Esophagus squamous epithelium (tissue), 5 donors: ENCODE measurements at regions of chr22 and their contacts with region 1.

Region 1: GRCh38 chr22:44729391-44730021 is 22.9 kb upstream of the ARHGAP8 start:
- DNase-seq: no peak
- H3K4me3 ChIP-seq: no peak overlapping the region
- H3K27ac ChIP-seq: peak overlapping the region; percentile 5 to 64 (median 36)
- H3K4me1 ChIP-seq: peaks cover 0 to 20% (median 8%) of the 10 kb centered on the region in 3 donors
- H3K27me3 ChIP-seq: no peaks in the 10 kb centered on the region
- CTCF ChIP-seq: no peak
- POLR2A ChIP-seq: no peak

Region 2: DNA sequence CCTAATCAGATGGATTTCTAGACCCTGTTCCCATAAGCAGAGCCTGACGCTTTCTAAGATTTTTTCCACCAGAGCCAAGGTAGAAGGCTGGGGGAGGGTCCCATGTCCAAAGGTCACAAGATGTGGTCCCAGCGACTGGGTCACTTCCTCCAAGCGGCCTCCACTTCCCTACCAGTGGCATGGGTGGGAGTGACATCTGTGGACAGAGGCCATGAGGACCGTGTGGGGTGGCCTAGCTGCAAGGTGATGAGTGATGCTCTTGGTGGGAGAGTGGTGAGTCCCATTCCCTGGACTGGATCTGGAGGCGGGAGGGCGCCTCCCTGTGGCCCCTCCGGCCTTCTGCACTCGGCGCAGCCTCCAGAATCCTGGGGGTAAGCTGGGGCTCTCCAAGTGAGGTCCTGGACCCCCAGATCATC is 59.9 kb before region 1 on chr22:
- intact Hi-C with region 1: no loop called
- DNase-seq: no peak
- H3K4me3 ChIP-seq: peak overlapping the region in 3 of 4 donors; percentile 51 to 76 (median 66)
- H3K27ac ChIP-seq: peak overlapping the region in 3 of 4 donors; percentile 46 to 89 (median 89)
- H3K4me1 ChIP-seq: peaks cover 12 to 55% (median 19%) of the 10 kb centered on the region in 3 donors
- H3K27me3 ChIP-seq: peaks cover 0 to 49% (median 0%) of the 10 kb centered on the region in 4 donors
- CTCF ChIP-seq: peak in 3 of 6 experiments; percentile 14 to 28 (median 23)
- POLR2A ChIP-seq: no peak

Region 3: GRCh38 chr22:44697423-44698141 is 31.9 kb before region 1 on chr22:
- intact Hi-C with region 1: loop called (anchors 5 kb)
- DNase-seq: no peak
- H3K4me3 ChIP-seq: no peak overlapping the region
- H3K27ac ChIP-seq: peak overlapping the region in 3 of 4 donors; percentile 50 to 81 (median 66)
- H3K4me1 ChIP-seq: peaks cover 12 to 38% (median 13%) of the 10 kb centered on the region in 3 donors
- H3K27me3 ChIP-seq: peaks cover 0 to 22% (median 0%) of the 10 kb centered on the region in 4 donors
- CTCF ChIP-seq: peak; percentile 88 to 95 (median 92)
- POLR2A ChIP-seq: no peak

Region 4: GRCh38 chr22:45336971-45337431 is 607.5 kb after region 1 on chr22:
- intact Hi-C with region 1: no loop called
- DNase-seq: no peak
- H3K4me3 ChIP-seq: peak overlapping the region in 1 of 4 donors; percentile 38
- H3K27ac ChIP-seq: peak overlapping the region; percentile 45 to 83 (median 74)
- H3K4me1 ChIP-seq: peaks cover 27 to 44% (median 33%) of the 10 kb centered on the region in 3 donors
- H3K27me3 ChIP-seq: no peaks in the 10 kb centered on the region
- CTCF ChIP-seq: no peak
- POLR2A ChIP-seq: no peak